ENCODE measurements at regions of chr2 and their contacts with region 1.

Region 1: DNA sequence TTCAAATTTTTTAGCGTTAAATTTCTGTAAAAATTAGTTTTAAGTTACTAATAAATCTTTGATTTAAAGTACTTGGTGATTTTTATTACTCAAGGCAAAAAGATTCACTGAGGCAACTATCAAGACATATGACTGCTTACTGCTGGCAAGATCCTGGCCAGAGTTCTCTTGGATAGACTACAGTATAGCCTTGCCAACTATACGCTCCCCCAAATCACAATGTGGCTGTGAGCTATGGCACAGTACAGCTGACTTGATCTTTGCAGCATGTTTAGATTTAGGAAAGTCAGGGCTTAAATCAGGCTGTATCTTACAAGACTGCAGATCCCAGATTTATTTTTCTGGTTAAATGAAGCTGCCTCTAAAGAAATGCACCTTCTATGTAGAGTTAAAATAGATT is 26.5 kb downstream of the MSTN start:
- DNase-seq: no peak
- H3K4me3 ChIP-seq: no peak overlapping the region
- H3K4me3 Mint-ChIP-seq: no peak overlapping the region
- H3K27ac Mint-ChIP-seq: no peak overlapping the region
- H3K4me1 ChIP-seq: no peaks in the 10 kb centered on the region
- H3K4me1 Mint-ChIP-seq: no peaks in the 10 kb centered on the region
- H3K27me3 ChIP-seq: peaks cover 1% of the 10 kb centered on the region; the same call in 1 of the 2 replicates
- H3K27me3 Mint-ChIP-seq: peaks cover 8% of the 10 kb centered on the region
- CTCF ChIP-seq: no peak

Region 2: GRCh38 chr2:189854940-189855339 is 181.1 kb before region 1 on chr2:
- CTCF ChIA-PET with region 1: no interaction called
- POLR2A ChIA-PET with region 1: interaction called, 10 read pairs
- intact Hi-C with region 1: no loop called
- DNase-seq: no peak
- H3K4me3 ChIP-seq: no peak overlapping the region
- H3K4me3 Mint-ChIP-seq: no peak overlapping the region
- H3K27ac Mint-ChIP-seq: no peak overlapping the region
- H3K4me1 ChIP-seq: no peaks in the 10 kb centered on the region
- H3K4me1 Mint-ChIP-seq: no peaks in the 10 kb centered on the region
- H3K27me3 ChIP-seq: no peaks in the 10 kb centered on the region
- H3K27me3 Mint-ChIP-seq: no peaks in the 10 kb centered on the region
- CTCF ChIP-seq: no peak

Region 3: DNA sequence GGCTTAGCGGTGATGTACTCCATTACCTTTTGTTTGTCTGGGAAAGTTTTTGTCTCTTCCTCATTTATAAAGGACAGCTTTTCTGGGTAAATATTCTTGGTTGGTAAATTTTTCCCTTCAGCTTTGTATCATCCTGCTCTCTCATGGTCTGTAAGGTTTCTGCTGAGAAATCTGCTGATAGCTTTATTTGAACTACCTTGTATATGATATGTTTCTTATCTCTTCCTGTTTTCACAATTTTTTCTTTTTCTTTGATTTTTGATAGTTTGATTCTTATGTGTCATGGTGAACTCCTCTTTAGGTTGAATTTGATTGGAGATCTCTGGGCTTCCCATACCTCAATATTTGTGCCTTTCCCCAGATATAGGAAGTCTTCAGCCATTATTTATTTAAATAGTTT is 18.2 kb before region 1 on chr2:
- CTCF ChIA-PET with region 1: no interaction called
- POLR2A ChIA-PET with region 1: no interaction called
- intact Hi-C with region 1: no loop called
- DNase-seq: no peak
- H3K4me3 ChIP-seq: no peak overlapping the region
- H3K4me3 Mint-ChIP-seq: no peak overlapping the region
- H3K27ac Mint-ChIP-seq: no peak overlapping the region
- H3K4me1 ChIP-seq: no peaks in the 10 kb centered on the region
- H3K4me1 Mint-ChIP-seq: no peaks in the 10 kb centered on the region
- H3K27me3 ChIP-seq: no peaks in the 10 kb centered on the region
- H3K27me3 Mint-ChIP-seq: peaks cover 4% of the 10 kb centered on the region
- CTCF ChIP-seq: no peak

Measured in Caco-2 (cell line).